ENCODE measurements at regions of chr7 and their contacts with region 1.

Region 1: DNA sequence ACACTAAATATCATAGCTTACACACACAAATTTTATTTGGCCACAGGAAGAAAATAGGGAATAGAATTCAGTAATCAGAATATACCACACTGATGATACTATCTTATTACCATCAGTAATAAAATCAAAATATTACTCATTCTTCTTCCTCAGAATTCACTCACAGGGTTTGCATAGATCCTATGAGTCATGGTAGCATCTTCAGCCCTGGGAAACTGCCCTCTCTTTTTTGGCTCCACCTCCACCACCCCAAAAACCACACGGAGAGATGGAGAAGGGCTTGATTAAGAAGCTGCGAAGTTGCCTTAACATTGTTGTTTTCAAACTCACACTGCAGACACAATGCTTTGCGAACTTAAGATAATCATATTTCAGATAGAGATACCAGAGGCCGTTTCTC is 154.1 kb upstream of the AHR start:
- DNase-seq: peak; percentile 46
- ATAC-seq: peak; percentile 44; the same call in 1 of the 2 replicates
- H3K4me3 ChIP-seq: no peak overlapping the region
- H3K27ac ChIP-seq: no peak overlapping the region
- H3K4me1 ChIP-seq: peaks cover 8% of the 10 kb centered on the region
- H3K27me3 ChIP-seq: no peaks in the 10 kb centered on the region
- CTCF ChIP-seq: no peak
- POLR2A ChIP-seq: no peak
- RAD21 ChIP-seq: no peak

Region 2: GRCh38 chr7:16604054-16604453 is 540.3 kb before region 1 on chr7:
- CTCF ChIA-PET with region 1: no interaction called
- POLR2A ChIA-PET with region 1: no interaction called
- dilution Hi-C with region 1: no loop called
- in situ Hi-C with region 1: no loop called
- intact Hi-C with region 1: loop called (anchors 5 kb)
- DNase-seq: no peak
- ATAC-seq: peak; percentile 40; the same call in 1 of the 2 replicates
- H3K4me3 ChIP-seq: no peak overlapping the region
- H3K27ac ChIP-seq: no peak overlapping the region
- H3K4me1 ChIP-seq: 0 out of 2 replicates have a peak, but pooled peaks cover 3% of the 10 kb centered on the region
- H3K27me3 ChIP-seq: no peaks in the 10 kb centered on the region
- CTCF ChIP-seq: 0 out of 2 replicates have a peak, but pooled peaks have one; percentile 24
- POLR2A ChIP-seq: no peak
- RAD21 ChIP-seq: peak; percentile 17; the same call in 1 of the 2 replicates

Region 3: DNA sequence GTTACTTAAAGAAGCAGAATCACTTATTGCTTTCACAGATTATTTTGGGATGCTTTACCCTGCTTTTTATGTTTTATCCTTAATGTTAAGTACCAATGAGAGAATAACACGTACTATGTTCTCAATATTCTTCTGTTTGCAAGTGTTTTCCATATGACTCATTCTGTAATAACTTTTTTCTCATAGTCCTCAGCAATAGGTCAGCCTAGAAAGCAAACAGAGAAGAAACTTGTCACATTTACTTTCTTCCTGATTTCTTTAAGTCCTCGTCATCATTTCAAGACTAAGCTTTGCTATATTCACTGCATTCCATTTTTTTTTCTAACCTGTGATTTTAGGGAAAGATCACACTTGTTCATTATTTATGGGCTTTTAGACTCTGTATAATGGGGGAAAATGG is 332.8 kb before region 1 on chr7:
- CTCF ChIA-PET with region 1: no interaction called
- POLR2A ChIA-PET with region 1: no interaction called
- dilution Hi-C with region 1: no loop called
- in situ Hi-C with region 1: no loop called
- intact Hi-C with region 1: no loop called
- DNase-seq: peak; percentile 73
- ATAC-seq: peak; percentile 90
- H3K4me3 ChIP-seq: no peak overlapping the region
- H3K27ac ChIP-seq: no peak overlapping the region
- H3K4me1 ChIP-seq: peaks cover 2% of the 10 kb centered on the region; the same call in 1 of the 2 replicates
- H3K27me3 ChIP-seq: no peaks in the 10 kb centered on the region
- CTCF ChIP-seq: no peak
- POLR2A ChIP-seq: no peak
- RAD21 ChIP-seq: no peak

Region 4: DNA sequence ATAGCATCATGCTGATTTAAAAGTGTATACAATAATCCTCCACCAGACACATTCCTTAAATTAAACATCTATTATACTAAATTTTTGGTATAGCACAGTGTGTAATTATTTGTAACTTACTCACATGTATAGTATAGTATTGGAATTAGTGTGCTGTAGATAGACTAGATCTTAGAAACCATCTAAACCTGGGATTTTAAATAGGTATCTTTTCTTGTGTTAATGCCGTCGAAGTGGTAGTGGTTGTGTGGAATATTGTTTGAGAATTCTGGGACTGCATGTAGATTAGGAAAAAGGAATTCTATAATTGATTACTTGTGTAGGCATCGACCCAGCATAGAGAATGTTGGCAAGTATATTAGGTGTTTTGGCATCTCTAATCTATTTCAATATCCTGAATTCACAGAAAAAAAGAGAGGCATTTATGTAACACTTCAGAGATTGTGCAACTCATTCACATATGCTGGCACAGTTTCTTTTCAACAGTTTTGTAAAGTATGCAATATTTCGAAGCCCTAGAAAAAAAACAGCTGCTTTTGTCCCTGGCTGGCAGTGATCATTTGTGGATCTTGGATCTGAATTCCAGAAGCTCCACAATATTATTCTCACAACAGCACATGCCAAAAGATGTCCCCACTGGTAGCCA is 117.1 kb before region 1 on chr7:
- CTCF ChIA-PET with region 1: no interaction called
- POLR2A ChIA-PET with region 1: no interaction called
- dilution Hi-C with region 1: no loop called
- in situ Hi-C with region 1: no loop called
- intact Hi-C with region 1: no loop called
- DNase-seq: no peak
- ATAC-seq: no peak
- H3K4me3 ChIP-seq: no peak overlapping the region
- H3K27ac ChIP-seq: no peak overlapping the region
- H3K4me1 ChIP-seq: no peaks in the 10 kb centered on the region; the same call in 1 of the 2 replicates
- H3K27me3 ChIP-seq: no peaks in the 10 kb centered on the region
- CTCF ChIP-seq: no peak
- POLR2A ChIP-seq: no peak
- RAD21 ChIP-seq: no peak

Measured in IMR-90 (cell line).